Panc1 (cell line): ENCODE measurements at regions of chr1 and their contacts with region 1.

Region 1: GRCh38 chr1:72140222-72140621 is 142.1 kb downstream of the NEGR1 start:
- DNase-seq: no peak
- ATAC-seq: no peak
- H3K4me3 ChIP-seq: no peak overlapping the region
- H3K27ac ChIP-seq: no peak overlapping the region
- H3K4me1 ChIP-seq: no peaks in the 10 kb centered on the region
- H3K27me3 ChIP-seq: no peaks in the 10 kb centered on the region
- CTCF ChIP-seq: no peak

Region 2: GRCh38 chr1:72094209-72094608 is 46.0 kb before region 1 on chr1:
- CTCF ChIA-PET with region 1: no interaction called
- POLR2A ChIA-PET with region 1: interaction called, 12 read pairs
- in situ Hi-C with region 1: no loop called
- intact Hi-C with region 1: no loop called
- DNase-seq: no peak
- ATAC-seq: no peak
- H3K4me3 ChIP-seq: no peak overlapping the region
- H3K27ac ChIP-seq: no peak overlapping the region
- H3K4me1 ChIP-seq: no peaks in the 10 kb centered on the region
- H3K27me3 ChIP-seq: no peaks in the 10 kb centered on the region
- CTCF ChIP-seq: no peak

Region 3: GRCh38 chr1:72202761-72203160 is 62.5 kb after region 1 on chr1:
- CTCF ChIA-PET with region 1: no interaction called
- POLR2A ChIA-PET with region 1: no interaction called
- in situ Hi-C with region 1: no loop called
- intact Hi-C with region 1: no loop called
- DNase-seq: no peak
- ATAC-seq: no peak
- H3K4me3 ChIP-seq: no peak overlapping the region
- H3K27ac ChIP-seq: no peak overlapping the region
- H3K4me1 ChIP-seq: no peaks in the 10 kb centered on the region
- H3K27me3 ChIP-seq: no peaks in the 10 kb centered on the region
- CTCF ChIP-seq: no peak

Region 4: GRCh38 chr1:72271555-72272085 is 131.4 kb after region 1 on chr1:
- CTCF ChIA-PET with region 1: no interaction called
- POLR2A ChIA-PET with region 1: no interaction called
- in situ Hi-C with region 1: no loop called
- intact Hi-C with region 1: no loop called
- DNase-seq: no peak
- ATAC-seq: no peak
- H3K4me3 ChIP-seq: no peak overlapping the region
- H3K27ac ChIP-seq: no peak overlapping the region
- H3K4me1 ChIP-seq: no peaks in the 10 kb centered on the region
- H3K27me3 ChIP-seq: no peaks in the 10 kb centered on the region
- CTCF ChIP-seq: no peak